Mammary epithelial cell (primary cell): ENCODE measurements at regions of chr5 and their contacts with region 1.

Region 1: DNA sequence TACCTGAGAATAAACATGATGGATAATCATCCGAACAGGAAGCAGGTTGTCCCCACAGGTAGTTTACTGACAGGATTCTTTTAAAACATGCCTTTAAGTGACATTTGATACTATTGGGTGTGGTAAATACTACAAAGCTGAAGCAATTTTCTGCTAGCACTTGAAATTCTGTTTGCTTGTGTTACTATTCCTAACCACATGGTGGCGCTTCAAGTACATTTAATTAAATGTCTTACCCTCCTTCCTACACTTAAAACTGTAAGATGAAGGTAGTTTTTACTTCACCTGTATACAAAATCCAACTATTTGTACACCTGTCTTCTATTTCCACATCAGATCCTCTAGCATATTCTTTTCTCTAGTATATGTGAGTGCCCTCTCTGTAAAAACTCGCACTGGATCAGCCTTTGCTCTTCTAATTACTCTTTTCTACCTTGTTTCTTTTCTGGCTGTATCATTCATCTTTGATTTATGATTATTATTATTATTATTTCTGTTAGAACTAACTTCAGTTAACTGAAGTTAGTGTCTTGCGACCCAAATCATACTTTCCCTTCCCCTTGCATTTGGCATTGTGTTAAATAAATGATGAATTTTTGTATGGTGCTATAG is 18.4 kb downstream of the SLC25A46 start:
- DNase-seq: peak; percentile 42
- H3K4me3 ChIP-seq: no peak overlapping the region
- H3K27ac ChIP-seq: no peak overlapping the region
- H3K4me1 ChIP-seq: no peaks in the 10 kb centered on the region
- H3K27me3 ChIP-seq: no peaks in the 10 kb centered on the region
- CTCF ChIP-seq: peak; percentile 52 to 61

Region 2: DNA sequence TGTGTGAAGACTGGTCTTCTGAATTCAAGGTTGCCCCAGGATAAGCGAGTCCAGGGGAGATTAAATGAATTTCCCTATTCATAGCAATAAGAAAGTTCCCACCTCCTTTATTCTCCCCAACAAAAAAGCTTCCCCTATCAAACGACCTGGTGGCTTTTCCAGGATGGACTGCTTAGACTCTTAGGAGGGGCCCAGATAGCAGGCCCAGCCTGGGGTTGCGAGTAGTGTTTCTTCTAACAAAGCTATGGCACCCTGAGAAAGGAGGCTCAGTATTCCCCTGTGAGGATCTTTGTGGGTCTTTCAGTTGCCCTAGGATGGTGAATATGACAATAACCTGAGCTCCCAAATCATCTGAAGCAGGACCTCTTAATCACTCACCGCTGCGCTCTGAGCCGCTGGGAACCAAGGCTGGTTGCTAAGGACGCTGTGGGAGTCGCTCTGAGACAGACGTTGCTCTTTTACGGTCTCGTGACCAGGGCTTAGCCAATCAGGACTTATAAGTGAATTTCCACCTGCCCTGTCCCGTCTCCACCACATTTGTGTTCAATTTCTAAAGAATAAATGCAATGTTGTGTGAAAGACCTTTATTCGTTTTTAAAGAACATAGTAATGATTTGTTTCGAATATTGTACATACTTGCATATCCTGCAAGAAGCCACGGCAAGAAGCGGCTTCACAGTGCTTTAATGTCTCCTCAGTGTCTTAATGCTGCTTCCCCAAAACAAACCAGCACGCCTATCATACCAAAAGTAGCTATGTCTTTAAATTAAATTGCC is 30.8 kb before region 1 on chr5 and contains the start of gene TMEM232:
- CTCF ChIA-PET with region 1: no interaction called
- dilution Hi-C with region 1: no loop called
- in situ Hi-C with region 1: no loop called
- intact Hi-C with region 1: no loop called
- DNase-seq: peak; percentile 79
- H3K4me3 ChIP-seq: no peak within 1 kb of the TSS
- H3K27ac ChIP-seq: no peak within 1 kb of the TSS
- H3K4me1 ChIP-seq: no peaks in the 10 kb centered on the region
- H3K27me3 ChIP-seq: no peaks in the 10 kb centered on the region
- CTCF ChIP-seq: no peak
- total RNA-seq, gene TMEM232: 0.71 to 2.0 TPM

Region 3: GRCh38 chr5:110865400-110866094 is 108.3 kb after region 1 on chr5:
- CTCF ChIA-PET with region 1: no interaction called
- dilution Hi-C with region 1: no loop called
- in situ Hi-C with region 1: loop called in 1 of 2 experiments (anchors 25 kb)
- intact Hi-C with region 1: loop called (anchors 1 kb)
- DNase-seq: peak; percentile 58
- H3K4me3 ChIP-seq: no peak overlapping the region
- H3K27ac ChIP-seq: no peak overlapping the region
- H3K4me1 ChIP-seq: no peaks in the 10 kb centered on the region
- H3K27me3 ChIP-seq: no peaks in the 10 kb centered on the region
- CTCF ChIP-seq: peak; percentile 88 to 89

Region 4: GRCh38 chr5:111063700-111064322 is 306.6 kb after region 1 on chr5:
- CTCF ChIA-PET with region 1: no interaction called
- dilution Hi-C with region 1: no loop called
- in situ Hi-C with region 1: loop called (anchors 10 kb)
- intact Hi-C with region 1: loop called (anchors 1 kb)
- DNase-seq: peak; percentile 60
- H3K4me3 ChIP-seq: no peak overlapping the region
- H3K27ac ChIP-seq: no peak overlapping the region
- H3K4me1 ChIP-seq: peaks cover 7% of the 10 kb centered on the region
- H3K27me3 ChIP-seq: no peaks in the 10 kb centered on the region
- CTCF ChIP-seq: peak; percentile 81 to 91

Region 5: DNA sequence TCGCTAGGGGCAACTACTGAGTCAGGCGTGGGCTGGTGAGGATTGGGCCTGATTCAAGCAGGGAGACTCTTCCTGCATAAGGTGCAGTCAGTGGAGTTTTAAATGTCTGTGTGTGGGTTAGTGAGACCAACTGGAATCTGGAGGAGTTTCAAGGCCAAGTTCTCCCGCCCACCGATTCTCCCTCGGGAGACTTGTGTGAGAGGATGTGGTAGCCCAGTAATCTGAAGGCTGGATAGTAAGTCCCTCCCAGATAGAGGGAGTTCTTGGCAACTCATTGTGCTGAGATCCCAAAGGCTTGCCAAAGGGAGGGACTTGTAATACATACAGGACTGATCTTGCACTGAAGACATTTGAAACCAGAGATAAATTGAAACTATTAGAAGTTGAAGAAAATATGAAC is 386.7 kb after region 1 on chr5:
- CTCF ChIA-PET with region 1: no interaction called
- dilution Hi-C with region 1: no loop called
- in situ Hi-C with region 1: no loop called
- intact Hi-C with region 1: loop called (anchors 10 kb)
- DNase-seq: peak; percentile 91
- H3K4me3 ChIP-seq: no peak overlapping the region
- H3K27ac ChIP-seq: peak overlapping the region; percentile 58
- H3K4me1 ChIP-seq: peaks cover 20% of the 10 kb centered on the region
- H3K27me3 ChIP-seq: no peaks in the 10 kb centered on the region
- CTCF ChIP-seq: no peak

Region 6: GRCh38 chr5:111478266-111478665 is 721.0 kb after region 1 on chr5:
- CTCF ChIA-PET with region 1: no interaction called
- dilution Hi-C with region 1: no loop called
- in situ Hi-C with region 1: loop called in 1 of 2 experiments (anchors 25 kb)
- intact Hi-C with region 1: no loop called
- DNase-seq: no peak
- H3K4me3 ChIP-seq: no peak overlapping the region
- H3K27ac ChIP-seq: no peak overlapping the region
- H3K4me1 ChIP-seq: no peaks in the 10 kb centered on the region
- H3K27me3 ChIP-seq: no peaks in the 10 kb centered on the region
- CTCF ChIP-seq: peak in 1 of 2 donors; percentile 24